ENCODE measurements at regions of chr19 and their contacts with region 1.

Region 1: GRCh38 chr19:4400135-4400936 is at the start of gene SH3GL1:
- DNase-seq: no peak
- H3K4me3 ChIP-seq: peak within 1 kb of the TSS; percentile 86
- CTCF ChIP-seq: peak; percentile 98

Region 2: DNA sequence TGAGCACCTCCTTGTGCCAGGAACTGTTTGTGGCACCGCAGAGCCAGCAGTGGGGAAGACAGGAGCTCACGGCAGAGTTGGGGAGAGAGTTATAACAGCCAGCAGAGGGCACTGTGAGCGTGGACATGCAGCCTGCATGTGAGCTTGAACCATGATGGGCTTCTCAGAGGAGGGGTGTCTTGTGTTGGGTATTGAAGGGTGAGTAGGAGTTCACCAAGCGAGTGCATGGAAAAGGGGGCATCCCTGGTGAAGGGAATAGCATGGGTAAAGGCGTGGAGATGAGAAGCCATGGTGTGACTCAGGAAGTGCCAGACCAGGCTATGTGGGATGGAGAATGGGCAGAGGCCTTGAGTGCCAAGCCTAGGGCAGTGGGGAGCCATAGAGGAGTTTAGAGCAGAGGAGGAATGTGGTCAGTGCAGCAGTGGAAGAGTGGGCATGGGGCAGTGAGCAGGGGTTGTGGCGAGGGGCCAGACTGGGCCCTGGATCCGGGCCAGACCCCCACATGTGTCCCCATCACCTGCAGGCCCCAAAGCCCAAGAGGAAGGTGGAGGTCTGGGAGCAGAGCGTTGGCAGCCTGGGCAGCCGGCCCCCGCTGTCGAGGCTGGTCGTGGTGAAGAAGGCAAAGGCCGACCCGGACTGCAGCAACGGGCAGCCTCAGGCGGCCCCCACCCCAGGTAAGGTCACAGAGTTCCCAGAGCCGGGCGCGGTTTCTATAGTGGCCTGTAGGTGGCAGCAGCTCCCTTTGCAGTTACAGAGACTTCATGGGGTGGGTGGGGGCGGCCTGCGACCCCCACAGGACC is 133.0 kb before region 1 on chr19:
- CTCF ChIA-PET with region 1: interaction called, 23 read pairs
- POLR2A ChIA-PET with region 1: no interaction called
- DNase-seq: no peak
- H3K4me3 ChIP-seq: no peak overlapping the region
- CTCF ChIP-seq: peak; percentile 74

Region 3: DNA sequence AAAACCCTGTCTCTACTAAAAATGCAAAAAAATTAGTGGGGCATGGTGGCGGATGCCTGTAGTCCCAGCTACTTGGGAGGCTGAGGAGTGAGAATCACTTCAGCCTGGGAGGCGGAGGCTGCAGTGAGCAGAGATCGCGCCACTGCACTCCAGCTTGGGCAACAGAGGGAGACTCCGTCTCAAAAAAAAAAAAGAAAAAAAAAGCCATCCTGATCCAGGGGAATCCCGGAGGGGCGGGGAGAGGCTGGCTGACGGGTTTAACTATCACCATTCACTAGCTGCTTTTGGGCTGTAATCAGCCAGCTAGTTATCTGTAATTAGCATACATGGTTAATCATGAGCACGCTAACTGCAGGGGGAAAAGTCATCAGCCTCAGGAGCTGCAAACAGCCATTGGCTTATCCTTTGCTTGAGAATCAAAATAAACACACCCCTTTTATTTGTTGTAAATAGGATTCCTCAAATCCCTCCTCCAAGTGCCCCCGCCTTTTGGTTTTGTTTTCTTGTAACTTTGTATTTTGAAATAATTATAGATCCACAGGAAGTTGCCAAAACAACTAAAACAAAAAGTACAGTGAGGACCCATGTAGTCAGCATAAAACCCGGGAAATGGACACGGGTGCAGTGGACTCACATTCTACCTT is 86.4 kb before region 1 on chr19:
- CTCF ChIA-PET with region 1: no interaction called
- POLR2A ChIA-PET with region 1: no interaction called
- DNase-seq: no peak
- H3K4me3 ChIP-seq: no peak overlapping the region
- CTCF ChIP-seq: no peak

Region 4: DNA sequence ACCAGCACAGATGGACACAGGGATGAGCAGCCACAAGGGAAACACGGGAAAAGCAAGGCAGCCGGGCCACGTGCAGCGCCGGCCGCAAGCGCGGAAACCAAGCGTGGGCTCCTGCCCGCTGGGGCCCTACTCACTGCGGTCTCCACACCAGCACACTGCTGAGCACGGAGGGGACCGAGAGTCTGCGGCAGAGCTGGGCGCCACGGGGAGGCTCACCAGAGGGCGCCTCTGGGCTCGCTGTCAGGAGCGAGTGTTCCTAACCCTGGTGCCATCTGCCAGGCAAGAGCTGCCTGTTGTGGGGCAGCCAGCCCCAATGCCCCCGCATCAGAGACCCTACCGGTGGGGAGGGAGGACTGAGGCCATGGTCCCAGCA is 30.5 kb before region 1 on chr19:
- CTCF ChIA-PET with region 1: interaction called, 78 read pairs
- POLR2A ChIA-PET with region 1: no interaction called
- DNase-seq: no peak
- H3K4me3 ChIP-seq: no peak overlapping the region
- CTCF ChIP-seq: peak; percentile 62

Region 5: GRCh38 chr19:4415352-4415751 is 15.0 kb after region 1 on chr19:
- CTCF ChIA-PET with region 1: interaction called, 123 read pairs
- POLR2A ChIA-PET with region 1: no interaction called
- DNase-seq: no peak
- H3K4me3 ChIP-seq: no peak overlapping the region
- CTCF ChIP-seq: no peak

Region 6: DNA sequence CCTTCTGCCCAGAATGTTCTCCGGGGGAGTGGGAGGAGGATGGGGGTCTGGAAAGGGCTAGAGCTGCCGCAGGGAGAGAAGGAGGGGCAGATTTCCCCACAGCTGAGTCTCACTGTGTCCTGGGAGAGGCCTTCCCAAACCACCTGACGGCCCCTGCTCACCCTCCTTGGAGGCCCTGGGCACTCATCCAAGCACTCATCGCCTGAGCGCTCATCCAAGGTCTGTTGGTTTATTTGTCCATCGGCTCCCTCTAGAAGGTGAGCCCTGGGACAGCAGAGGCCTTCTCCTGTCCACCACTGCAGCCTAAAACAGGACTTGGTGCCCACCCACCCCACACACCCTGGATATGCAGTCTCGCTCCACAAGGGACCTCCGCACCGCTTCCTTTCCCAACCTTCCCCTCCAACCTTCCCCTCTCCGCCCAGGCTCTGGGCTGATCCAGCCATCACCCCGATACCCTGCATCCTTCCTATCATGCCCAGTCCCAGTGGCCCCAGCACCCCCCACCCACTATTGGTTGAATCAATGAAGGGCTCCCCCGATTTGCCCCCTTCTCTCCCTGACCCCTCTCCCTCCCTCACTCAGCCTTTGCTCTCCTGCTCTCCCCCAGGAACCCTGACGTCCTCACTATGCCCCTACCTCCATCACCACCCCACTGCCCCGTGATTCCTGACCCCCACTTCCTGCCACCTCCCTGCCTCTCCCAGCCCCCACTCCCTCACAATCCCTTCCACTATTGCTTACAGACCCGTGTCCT is 55.6 kb after region 1 on chr19:
- CTCF ChIA-PET with region 1: interaction called, 10 read pairs
- POLR2A ChIA-PET with region 1: interaction called, 5 read pairs
- DNase-seq: no peak
- H3K4me3 ChIP-seq: peak overlapping the region; percentile 91
- CTCF ChIP-seq: peak; percentile 2

Region 7: GRCh38 chr19:4477034-4477801 is 76.9 kb after region 1 on chr19:
- CTCF ChIA-PET with region 1: no interaction called
- POLR2A ChIA-PET with region 1: no interaction called
- DNase-seq: no peak
- H3K4me3 ChIP-seq: no peak overlapping the region
- CTCF ChIP-seq: no peak

Measured in AG04449 (cell line).